ENCODE measurements at regions of chr3 and their contacts with region 1.

Region 1: GRCh38 chr3:57597122-57597923 is at the start of gene ARF4:
- DNase-seq: peak; percentile 99
- H3K4me3 Mint-ChIP-seq: peak within 1 kb of the TSS; percentile 97
- H3K27ac Mint-ChIP-seq: peak within 1 kb of the TSS; percentile 100
- H3K4me1 Mint-ChIP-seq: peaks cover 46% of the 10 kb centered on the region
- H3K27me3 Mint-ChIP-seq: no peaks in the 10 kb centered on the region
- total RNA-seq, gene ARF4: 49.0 to 50.8 TPM

Region 2: DNA sequence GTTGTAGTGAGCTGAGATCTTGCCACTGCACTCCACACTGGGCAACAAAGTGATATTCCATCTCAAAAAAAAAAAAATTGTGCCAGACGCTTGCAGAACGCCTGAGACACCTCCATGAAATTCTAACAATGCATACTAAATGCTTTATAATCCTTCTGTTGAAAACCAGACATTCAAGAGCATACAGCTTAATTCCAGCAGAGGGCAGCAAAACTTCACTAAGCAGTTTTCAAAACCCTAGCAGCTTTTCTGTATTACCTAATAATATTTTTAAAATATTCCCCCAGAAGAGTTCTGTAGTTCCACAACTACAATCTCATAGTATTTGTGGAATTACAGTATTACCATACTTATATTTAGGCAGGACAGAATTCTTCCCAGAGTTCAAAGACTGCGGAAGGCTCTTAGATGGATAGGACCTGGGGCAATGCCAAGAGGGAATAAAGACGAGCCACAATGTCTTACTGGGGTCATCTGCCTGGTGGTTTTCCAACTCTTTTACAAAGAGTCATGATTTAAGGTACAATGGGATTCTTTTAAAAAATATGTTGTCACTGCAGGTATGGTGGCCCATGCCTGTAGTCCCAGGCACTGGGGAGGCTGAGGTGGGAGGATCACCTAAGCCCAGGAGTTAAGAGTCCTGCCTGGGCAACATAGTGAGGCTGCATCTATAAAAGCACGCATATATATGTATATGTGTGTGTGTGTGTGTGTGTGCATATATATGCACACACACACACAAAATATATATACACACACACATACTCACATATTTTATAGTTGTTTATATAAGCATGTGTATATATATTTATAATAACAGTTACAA is 894.6 kb before region 1 on chr3:
- CTCF ChIA-PET with region 1: no interaction called
- intact Hi-C with region 1: loop called (anchors 10 kb)
- DNase-seq: peak; percentile 70
- H3K4me3 Mint-ChIP-seq: no peak overlapping the region
- H3K27ac Mint-ChIP-seq: no peak overlapping the region
- H3K4me1 Mint-ChIP-seq: peaks cover 17% of the 10 kb centered on the region
- H3K27me3 Mint-ChIP-seq: no peaks in the 10 kb centered on the region

Region 3: DNA sequence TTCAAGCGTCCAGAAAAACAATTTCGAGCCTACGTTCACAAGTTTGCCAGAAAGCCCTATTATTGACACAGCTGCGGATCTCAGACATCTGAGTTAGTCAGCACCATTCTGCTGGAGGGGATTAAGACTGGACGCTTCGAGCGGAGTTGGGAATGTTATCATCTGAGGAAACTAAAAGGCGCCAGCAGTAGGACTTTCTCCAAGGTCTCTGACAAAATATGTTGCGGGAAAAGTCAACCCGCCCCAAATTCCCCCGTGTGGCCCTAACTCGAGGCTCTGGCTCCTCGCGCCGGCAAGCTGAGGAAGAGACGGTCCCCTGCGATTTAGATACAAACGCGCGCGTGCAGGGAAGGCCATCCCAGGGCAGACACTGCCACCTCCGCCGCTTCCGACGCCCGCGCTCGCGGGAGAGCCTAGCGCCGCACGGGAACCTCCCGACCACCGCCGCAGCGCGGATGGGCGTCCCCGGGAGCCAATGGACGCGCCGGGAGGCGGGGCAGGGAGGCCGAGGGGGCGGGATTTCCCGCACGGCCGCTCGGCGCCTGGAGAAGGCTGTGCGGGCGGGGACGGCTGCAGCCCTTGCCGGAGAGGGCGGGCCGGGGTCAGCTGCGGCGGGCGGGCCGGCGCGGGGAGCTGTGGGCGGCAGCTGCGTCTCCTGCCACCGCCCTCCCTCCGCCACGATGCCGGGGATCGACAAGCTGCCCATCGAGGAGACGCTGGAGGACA is 370.0 kb before region 1 on chr3 and contains the start of gene APPL1:
- CTCF ChIA-PET with region 1: no interaction called
- intact Hi-C with region 1: loop called (anchors 1 kb)
- DNase-seq: peak; percentile 93
- H3K4me3 Mint-ChIP-seq: peak within 1 kb of the TSS; percentile 88
- H3K27ac Mint-ChIP-seq: peak within 1 kb of the TSS; percentile 63
- H3K4me1 Mint-ChIP-seq: peaks cover 26% of the 10 kb centered on the region
- H3K27me3 Mint-ChIP-seq: no peaks in the 10 kb centered on the region
- total RNA-seq, gene APPL1: 30.8 to 35.1 TPM

Region 4: DNA sequence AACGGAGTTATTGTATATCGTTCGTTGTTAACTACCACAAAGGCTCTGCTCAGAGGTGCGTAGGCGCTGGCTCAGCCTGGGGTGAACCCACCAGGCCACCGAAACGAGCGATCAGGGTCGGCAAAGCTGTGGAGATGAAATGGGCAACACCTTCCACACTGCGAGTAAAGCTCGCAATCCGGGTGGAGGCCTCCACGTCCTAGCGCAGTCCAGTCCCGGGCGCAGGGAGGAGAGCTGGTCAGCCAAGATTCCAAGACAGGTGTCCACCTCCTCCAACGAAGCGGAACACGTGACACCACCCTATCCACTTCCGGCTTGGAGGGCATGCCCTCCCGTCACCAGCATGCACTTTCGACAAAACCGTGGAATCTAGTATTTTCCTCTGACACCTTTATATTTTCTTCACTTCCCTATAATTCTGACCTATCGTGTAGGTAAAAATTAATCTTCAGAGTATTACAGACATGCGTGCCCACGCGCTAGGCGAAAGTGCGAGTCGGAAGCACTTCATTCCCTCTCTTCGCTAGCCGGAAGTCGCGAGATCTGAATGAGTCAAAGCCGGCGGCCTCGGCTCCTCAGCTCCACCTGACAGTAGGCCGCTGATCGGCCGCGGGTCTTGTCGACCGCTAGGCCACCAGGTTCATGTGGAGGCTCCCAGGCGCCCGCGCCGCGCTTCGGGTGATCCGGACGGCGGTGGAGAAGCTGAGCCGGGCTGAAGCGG is 41.4 kb before region 1 on chr3 and contains the start of gene PDE12:
- CTCF ChIA-PET with region 1: no interaction called
- intact Hi-C with region 1: loop called (anchors 1 kb)
- DNase-seq: peak; percentile 89
- H3K4me3 Mint-ChIP-seq: peak within 1 kb of the TSS; percentile 98
- H3K27ac Mint-ChIP-seq: peak within 1 kb of the TSS; percentile 98
- H3K4me1 Mint-ChIP-seq: peaks cover 33% of the 10 kb centered on the region
- H3K27me3 Mint-ChIP-seq: no peaks in the 10 kb centered on the region
- total RNA-seq, gene PDE12: 15.3 to 15.6 TPM

Region 5: GRCh38 chr3:57755668-57756527 is 158.6 kb after region 1 on chr3 and contains the start of gene SLMAP:
- CTCF ChIA-PET with region 1: interaction called, 3 read pairs
- intact Hi-C with region 1: loop called (anchors 1 kb)
- DNase-seq: peak; percentile 99
- H3K4me3 Mint-ChIP-seq: peak within 1 kb of the TSS; percentile 98
- H3K27ac Mint-ChIP-seq: peak within 1 kb of the TSS; percentile 92
- H3K4me1 Mint-ChIP-seq: peaks cover 36% of the 10 kb centered on the region
- H3K27me3 Mint-ChIP-seq: no peaks in the 10 kb centered on the region
- total RNA-seq, gene SLMAP: 35.1 TPM

Region 6: GRCh38 chr3:57803647-57804081 is 206.3 kb after region 1 on chr3:
- CTCF ChIA-PET with region 1: no interaction called
- intact Hi-C with region 1: loop called (anchors 1 kb)
- DNase-seq: no peak
- H3K4me3 Mint-ChIP-seq: peak overlapping the region; percentile 3
- H3K27ac Mint-ChIP-seq: peak overlapping the region; percentile 33
- H3K4me1 Mint-ChIP-seq: peaks cover 70% of the 10 kb centered on the region
- H3K27me3 Mint-ChIP-seq: no peaks in the 10 kb centered on the region

Region 7: DNA sequence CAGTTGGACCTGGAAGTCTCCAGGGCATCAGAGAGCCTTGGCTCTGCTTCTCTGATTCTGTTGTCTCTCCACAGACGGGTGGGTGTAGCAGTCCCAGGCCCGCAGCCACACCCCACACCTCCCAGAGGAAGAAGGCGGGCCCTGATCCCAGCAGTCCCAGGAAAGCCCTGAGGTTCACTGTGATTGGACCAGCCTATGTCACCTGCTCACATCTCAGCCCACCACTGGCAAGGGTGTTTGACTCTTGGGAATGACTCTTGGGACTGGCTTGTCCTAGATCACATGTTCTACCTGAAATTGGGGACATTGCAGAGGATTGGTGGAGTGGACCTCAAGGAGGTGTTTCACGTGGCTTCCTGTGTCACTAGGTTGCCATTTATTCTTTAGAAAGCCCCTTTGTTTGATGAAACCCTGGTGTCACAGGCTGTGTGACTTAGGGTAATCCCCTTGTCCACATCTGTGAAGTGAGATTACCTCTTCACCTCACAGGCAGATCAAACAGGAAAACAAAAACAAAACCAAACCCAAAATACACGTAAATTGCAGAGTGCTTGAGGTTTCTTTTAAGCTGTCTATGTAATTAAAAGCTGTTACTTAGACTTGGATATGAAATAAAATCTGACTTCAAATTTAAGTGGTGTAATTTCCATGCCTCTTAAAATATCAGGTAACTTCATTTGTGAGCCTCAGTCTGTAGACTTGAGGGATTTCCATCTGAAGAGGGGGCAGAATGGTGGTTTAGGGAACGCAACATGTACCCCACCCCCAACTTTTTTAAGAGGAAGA is 437.6 kb after region 1 on chr3:
- CTCF ChIA-PET with region 1: no interaction called
- intact Hi-C with region 1: loop called (anchors 1 kb)
- DNase-seq: peak; percentile 78
- H3K4me3 Mint-ChIP-seq: no peak overlapping the region
- H3K27ac Mint-ChIP-seq: peak overlapping the region; percentile 84
- H3K4me1 Mint-ChIP-seq: peaks cover 60% of the 10 kb centered on the region
- H3K27me3 Mint-ChIP-seq: no peaks in the 10 kb centered on the region

Measured in activated naive CD4-positive, alpha-beta T cell treated with anti-CD3 and anti-CD28 coated beads for 36 hours (primary cell).